H1 (cell line): ENCODE measurements at regions of chr9 and their contacts with region 1.

Region 1: GRCh38 chr9:84966876-84967833 is 297.6 kb downstream of the NTRK2 start:
- DNase-seq: peak; percentile 39 to 80
- H3K4me3 ChIP-seq: no peak overlapping the region
- H3K27ac ChIP-seq: no peak overlapping the region
- H3K4me1 ChIP-seq: no peaks in the 10 kb centered on the region
- H3K27me3 ChIP-seq: no peaks in the 10 kb centered on the region
- CTCF ChIP-seq: peak; percentile 76 to 91 (median 86)
- EP300 ChIP-seq: no peak
- POLR2A ChIP-seq: no peak
- RAD21 ChIP-seq: peak; percentile 89 to 94

Region 2: GRCh38 chr9:84397151-84397728 is 569.9 kb before region 1 on chr9:
- CTCF ChIA-PET with region 1: interaction called, 22 read pairs
- POLR2A ChIA-PET with region 1: no interaction called
- DNase-seq: peak; percentile 31 to 81
- H3K4me3 ChIP-seq: no peak overlapping the region
- H3K27ac ChIP-seq: no peak overlapping the region
- H3K4me1 ChIP-seq: no peaks in the 10 kb centered on the region
- H3K27me3 ChIP-seq: no peaks in the 10 kb centered on the region
- CTCF ChIP-seq: peak; percentile 74 to 84 (median 77)
- EP300 ChIP-seq: no peak
- POLR2A ChIP-seq: no peak
- RAD21 ChIP-seq: peak; percentile 92 to 95

Region 3: GRCh38 chr9:84697509-84698114 is 269.5 kb before region 1 on chr9:
- CTCF ChIA-PET with region 1: interaction called, 44 read pairs
- POLR2A ChIA-PET with region 1: no interaction called
- DNase-seq: peak; percentile 80 to 90
- H3K4me3 ChIP-seq: no peak overlapping the region
- H3K27ac ChIP-seq: no peak overlapping the region
- H3K4me1 ChIP-seq: peaks cover 0 to 6% (median 0%) of the 10 kb centered on the region in 4 experiments; a peak in 4 of 7 replicates
- H3K27me3 ChIP-seq: no peaks in the 10 kb centered on the region
- CTCF ChIP-seq: peak; percentile 90 to 95 (median 90)
- EP300 ChIP-seq: no peak; a peak in 1 of 3 replicates
- POLR2A ChIP-seq: no peak
- RAD21 ChIP-seq: peak; percentile 95 to 97

Region 4: DNA sequence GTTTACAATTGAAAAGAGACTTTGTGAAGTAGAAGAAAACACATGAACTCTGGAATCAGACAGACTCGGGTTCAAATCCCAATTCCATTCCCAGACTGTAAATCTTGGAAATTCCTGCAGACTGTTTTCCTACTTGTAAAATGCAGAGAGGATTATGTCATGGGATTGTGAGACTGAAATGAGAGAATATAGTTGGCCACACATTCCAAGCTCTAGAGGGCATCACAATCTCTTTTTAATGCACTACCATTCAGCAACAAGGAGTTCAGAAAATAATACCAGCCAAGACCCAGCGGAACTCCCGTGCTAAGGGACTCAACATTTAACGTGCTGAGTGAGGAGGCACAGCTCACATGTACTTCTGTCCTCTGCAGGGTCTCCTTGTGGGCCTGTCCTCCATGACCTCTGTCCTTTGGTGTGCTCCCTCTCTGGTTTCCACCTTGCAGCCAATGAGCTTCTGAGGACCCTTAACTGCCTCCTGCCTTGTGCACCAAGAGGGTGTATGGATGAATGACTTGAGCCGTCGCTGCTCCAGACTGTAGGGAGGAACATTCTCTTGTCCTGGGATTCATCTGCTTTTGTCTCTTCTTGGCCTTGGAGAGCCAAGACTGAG is 34.1 kb before region 1 on chr9:
- CTCF ChIA-PET with region 1: interaction called, 16 read pairs
- POLR2A ChIA-PET with region 1: no interaction called
- DNase-seq: no peak
- H3K4me3 ChIP-seq: no peak overlapping the region
- H3K27ac ChIP-seq: no peak overlapping the region
- H3K4me1 ChIP-seq: peaks cover 0 to 5% (median 3%) of the 10 kb centered on the region in 4 experiments; a peak in 3 of 7 replicates
- H3K27me3 ChIP-seq: no peaks in the 10 kb centered on the region
- CTCF ChIP-seq: peak in 2 of 3 experiments; percentile 31 to 62; a peak in 2 of 4 replicates
- EP300 ChIP-seq: no peak
- POLR2A ChIP-seq: no peak
- RAD21 ChIP-seq: peak; percentile 36 to 39

Region 5: GRCh38 chr9:84953797-84954705 is 13.1 kb before region 1 on chr9:
- CTCF ChIA-PET with region 1: interaction called, 35 read pairs
- POLR2A ChIA-PET with region 1: no interaction called
- DNase-seq: peak; percentile 56 to 92
- H3K4me3 ChIP-seq: no peak overlapping the region
- H3K27ac ChIP-seq: no peak overlapping the region
- H3K4me1 ChIP-seq: no peaks in the 10 kb centered on the region
- H3K27me3 ChIP-seq: peaks cover 0 to 7% (median 2%) of the 10 kb centered on the region in 4 experiments; a peak in 1 of 7 replicates
- CTCF ChIP-seq: peak; percentile 94 to 97 (median 97)
- EP300 ChIP-seq: no peak
- POLR2A ChIP-seq: no peak
- RAD21 ChIP-seq: peak; percentile 94 to 95

Region 6: DNA sequence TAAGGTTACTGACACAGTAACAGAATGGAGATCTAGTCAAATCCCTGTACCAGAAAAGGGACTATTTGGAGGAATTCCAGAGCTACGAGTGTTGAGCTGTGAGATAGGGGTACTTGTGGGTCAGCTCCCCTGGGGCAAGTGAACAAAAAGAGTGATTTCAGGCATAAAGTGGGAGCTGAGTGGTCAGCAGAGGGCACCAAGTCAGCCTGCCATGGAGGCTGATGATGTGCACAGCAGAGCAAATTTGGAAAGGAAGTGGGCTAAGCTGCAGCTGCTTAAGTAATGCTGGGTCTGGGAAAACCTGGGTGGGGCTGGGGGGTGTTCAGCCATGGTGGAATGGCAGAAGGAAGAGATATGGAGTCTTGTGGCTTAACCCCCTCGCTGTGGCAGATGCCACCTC is 30.3 kb after region 1 on chr9:
- CTCF ChIA-PET with region 1: interaction called, 22 read pairs
- POLR2A ChIA-PET with region 1: no interaction called
- DNase-seq: no peak
- H3K4me3 ChIP-seq: no peak overlapping the region
- H3K27ac ChIP-seq: no peak overlapping the region
- H3K4me1 ChIP-seq: peaks cover 0 to 10% (median under 1%) of the 10 kb centered on the region in 4 experiments; a peak in 4 of 7 replicates
- H3K27me3 ChIP-seq: no peaks in the 10 kb centered on the region
- CTCF ChIP-seq: peak; percentile 13 to 42 (median 23); a peak in 3 of 4 replicates
- EP300 ChIP-seq: no peak
- POLR2A ChIP-seq: no peak
- RAD21 ChIP-seq: peak; percentile 43 to 54

Region 7: GRCh38 chr9:85425153-85425611 is 458.0 kb after region 1 on chr9:
- CTCF ChIA-PET with region 1: interaction called, 10 read pairs
- POLR2A ChIA-PET with region 1: no interaction called
- DNase-seq: peak; percentile 74 to 98
- H3K4me3 ChIP-seq: no peak overlapping the region
- H3K27ac ChIP-seq: no peak overlapping the region
- H3K4me1 ChIP-seq: peaks cover 0 to 4% (median under 1%) of the 10 kb centered on the region in 4 experiments; a peak in 2 of 7 replicates
- H3K27me3 ChIP-seq: no peaks in the 10 kb centered on the region
- CTCF ChIP-seq: peak; percentile 65 to 93 (median 78)
- EP300 ChIP-seq: no peak
- POLR2A ChIP-seq: no peak
- RAD21 ChIP-seq: peak; percentile 94 to 96